Sciatic nerve (tissue), 2 donors: ENCODE measurements at regions of chr11 and their contacts with region 1.

Region 1: DNA sequence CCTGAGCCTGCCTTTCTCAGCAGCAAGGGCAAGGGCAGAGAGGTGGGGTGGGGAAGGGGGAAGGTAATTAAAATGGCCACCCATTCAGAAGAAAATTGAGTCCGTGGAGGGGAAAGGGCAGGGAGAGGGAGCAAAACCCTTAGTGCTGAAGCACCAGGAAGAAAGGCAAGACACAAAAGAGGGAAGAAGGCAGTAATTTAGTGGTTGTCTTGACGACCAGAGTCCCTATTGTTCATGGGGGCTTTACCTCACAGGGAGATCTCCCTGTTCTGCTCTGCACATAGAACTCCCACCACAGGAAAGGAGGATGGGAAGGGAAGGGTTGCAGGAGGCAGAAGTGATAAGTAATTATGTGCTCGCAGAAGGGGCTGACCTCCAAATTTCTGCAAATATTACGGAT is 23.4 kb downstream of the SNX19 start:
- DNase-seq: no peak
- ATAC-seq: no peak

Region 2: GRCh38 chr11:130940706-130941105 is 47.8 kb after region 1 on chr11:
- intact Hi-C with region 1: loop called (anchors 2 kb)
- DNase-seq: no peak
- ATAC-seq: no peak